Activated CD4-positive, alpha-beta memory T cell treated with anti-CD3 and anti-CD28 coated beads for 36 hours (primary cell): ENCODE measurements at regions of chr2 and their contacts with region 1.

Region 1: DNA sequence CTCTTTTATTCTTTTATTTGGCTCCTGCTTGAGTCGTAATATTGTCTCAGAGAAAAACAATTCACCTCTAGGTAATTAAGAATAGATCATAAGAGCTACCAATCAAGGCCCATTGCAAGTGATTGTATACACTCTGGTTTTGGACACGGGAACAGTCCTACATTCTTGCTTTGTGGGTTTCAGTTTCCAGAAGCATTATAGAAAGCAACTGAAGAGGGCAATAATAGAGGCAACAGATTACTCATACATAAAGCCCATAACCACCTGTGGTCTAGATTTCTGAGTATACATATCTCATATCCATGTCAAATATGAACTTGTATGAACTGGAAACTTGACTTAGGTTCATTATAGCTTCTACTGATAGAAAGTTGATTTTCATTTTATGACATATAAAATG is 65.4 kb downstream of the DIS3L2 start:
- DNase-seq: no peak
- H3K4me3 Mint-ChIP-seq: no peak overlapping the region
- H3K27ac Mint-ChIP-seq: peak overlapping the region; percentile 40
- H3K4me1 Mint-ChIP-seq: peaks cover 30% of the 10 kb centered on the region
- H3K27me3 Mint-ChIP-seq: peaks cover 2% of the 10 kb centered on the region

Region 2: DNA sequence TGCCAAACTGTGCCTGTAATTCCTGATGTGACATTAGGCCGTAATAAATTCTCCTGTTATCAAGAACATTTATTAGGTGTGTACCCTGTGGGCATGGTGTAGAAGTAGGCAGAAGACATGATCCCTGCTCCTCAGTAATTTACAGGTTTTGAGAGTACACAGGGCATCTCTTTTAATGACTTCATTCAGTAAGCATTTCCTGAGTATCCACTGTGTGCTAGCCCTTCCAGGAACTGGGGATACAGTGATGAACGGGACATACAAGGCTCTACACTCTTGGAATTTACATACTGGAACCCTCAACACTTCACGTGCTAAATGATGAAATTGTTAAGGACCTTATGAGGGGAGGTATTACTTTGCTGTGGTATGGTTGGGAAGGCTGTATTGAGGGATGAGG is 35.2 kb before region 1 on chr2:
- CTCF ChIA-PET with region 1: no interaction called
- POLR2A ChIA-PET with region 1: no interaction called
- intact Hi-C with region 1: no loop called
- DNase-seq: no peak
- H3K4me3 Mint-ChIP-seq: no peak overlapping the region
- H3K27ac Mint-ChIP-seq: no peak overlapping the region
- H3K4me1 Mint-ChIP-seq: peaks cover 31% of the 10 kb centered on the region
- H3K27me3 Mint-ChIP-seq: no peaks in the 10 kb centered on the region

Region 3: DNA sequence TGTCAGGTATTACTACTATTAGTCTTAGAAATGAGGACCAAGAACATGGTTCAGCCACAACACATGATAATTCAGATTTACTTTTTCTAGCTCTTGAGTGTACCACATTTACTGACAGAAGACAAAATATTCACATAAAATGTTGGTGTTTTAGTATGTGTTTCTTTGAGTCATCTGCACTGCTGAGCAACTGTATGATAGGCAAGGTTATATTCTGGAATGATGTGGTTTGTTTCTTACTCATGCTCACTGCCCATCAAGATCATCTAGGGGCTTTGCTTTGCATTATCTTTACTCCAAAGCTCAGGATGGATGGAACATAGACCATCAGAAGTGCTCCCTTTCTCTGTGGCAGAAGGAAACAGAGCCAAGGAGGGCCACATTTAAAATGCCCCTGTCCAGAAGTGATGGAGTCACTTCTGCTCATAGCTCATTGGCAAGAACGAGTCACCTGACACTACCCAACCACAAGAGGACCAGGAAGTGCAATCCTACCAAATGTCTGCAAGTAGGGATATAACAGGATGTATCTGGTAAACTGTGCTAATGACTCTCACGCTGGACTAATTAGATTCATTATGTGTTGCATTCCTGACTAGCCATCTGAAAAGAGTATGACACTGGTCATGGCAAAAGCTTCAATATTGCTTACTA is 16.1 kb after region 1 on chr2:
- CTCF ChIA-PET with region 1: no interaction called
- POLR2A ChIA-PET with region 1: no interaction called
- intact Hi-C with region 1: no loop called
- DNase-seq: no peak
- H3K4me3 Mint-ChIP-seq: no peak overlapping the region
- H3K27ac Mint-ChIP-seq: no peak overlapping the region
- H3K4me1 Mint-ChIP-seq: peaks cover 10% of the 10 kb centered on the region
- H3K27me3 Mint-ChIP-seq: no peaks in the 10 kb centered on the region

Region 4: GRCh38 chr2:232058063-232058877 is 31.4 kb after region 1 on chr2:
- CTCF ChIA-PET with region 1: interaction called, 13 read pairs
- POLR2A ChIA-PET with region 1: interaction called, 10 read pairs
- intact Hi-C with region 1: loop called (anchors 1 kb)
- DNase-seq: no peak
- H3K4me3 Mint-ChIP-seq: no peak overlapping the region
- H3K27ac Mint-ChIP-seq: no peak overlapping the region
- H3K4me1 Mint-ChIP-seq: peaks cover 22% of the 10 kb centered on the region
- H3K27me3 Mint-ChIP-seq: no peaks in the 10 kb centered on the region

Region 5: DNA sequence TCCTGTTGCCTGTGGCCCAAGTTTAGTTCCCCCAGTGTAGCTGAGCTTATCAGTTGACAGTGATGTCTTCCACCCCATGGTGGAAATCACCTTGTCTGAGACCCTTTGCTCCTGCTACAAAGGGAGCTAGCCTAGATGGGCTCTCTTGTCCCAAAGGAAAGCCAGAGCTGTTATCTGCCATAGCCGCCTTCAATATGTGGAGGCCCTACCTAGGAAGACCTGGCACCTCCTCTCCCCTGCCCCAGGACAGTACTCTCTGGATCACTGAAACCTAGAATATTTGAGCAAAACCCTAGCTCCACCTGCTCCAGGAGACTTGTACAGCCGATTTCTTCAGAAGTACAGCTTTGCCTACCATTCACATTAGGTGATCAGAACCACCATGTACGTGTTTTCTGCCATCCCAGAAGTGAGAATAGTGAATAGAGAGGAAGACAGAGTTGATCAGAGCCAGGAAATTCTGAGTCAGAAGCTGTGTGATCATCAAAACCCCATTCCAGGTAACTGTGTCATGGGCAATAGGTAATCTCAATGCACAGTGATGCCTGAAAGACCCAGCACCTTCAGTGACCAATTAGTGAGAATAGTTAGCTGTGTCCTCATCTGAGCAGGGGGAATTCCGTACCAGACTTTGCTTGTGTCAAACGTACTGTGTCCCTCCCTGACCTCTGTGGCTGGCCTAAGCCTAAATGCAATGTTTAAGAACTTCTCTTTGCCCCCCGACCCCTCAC is 213.2 kb after region 1 on chr2:
- CTCF ChIA-PET with region 1: no interaction called
- POLR2A ChIA-PET with region 1: no interaction called
- intact Hi-C with region 1: loop called (anchors 1 kb)
- DNase-seq: peak; percentile 47
- H3K4me3 Mint-ChIP-seq: no peak overlapping the region
- H3K27ac Mint-ChIP-seq: peak overlapping the region; percentile 81
- H3K4me1 Mint-ChIP-seq: peaks cover 43% of the 10 kb centered on the region
- H3K27me3 Mint-ChIP-seq: no peaks in the 10 kb centered on the region